ENCODE measurements at regions of chr7 and their contacts with region 1.

Region 1: DNA sequence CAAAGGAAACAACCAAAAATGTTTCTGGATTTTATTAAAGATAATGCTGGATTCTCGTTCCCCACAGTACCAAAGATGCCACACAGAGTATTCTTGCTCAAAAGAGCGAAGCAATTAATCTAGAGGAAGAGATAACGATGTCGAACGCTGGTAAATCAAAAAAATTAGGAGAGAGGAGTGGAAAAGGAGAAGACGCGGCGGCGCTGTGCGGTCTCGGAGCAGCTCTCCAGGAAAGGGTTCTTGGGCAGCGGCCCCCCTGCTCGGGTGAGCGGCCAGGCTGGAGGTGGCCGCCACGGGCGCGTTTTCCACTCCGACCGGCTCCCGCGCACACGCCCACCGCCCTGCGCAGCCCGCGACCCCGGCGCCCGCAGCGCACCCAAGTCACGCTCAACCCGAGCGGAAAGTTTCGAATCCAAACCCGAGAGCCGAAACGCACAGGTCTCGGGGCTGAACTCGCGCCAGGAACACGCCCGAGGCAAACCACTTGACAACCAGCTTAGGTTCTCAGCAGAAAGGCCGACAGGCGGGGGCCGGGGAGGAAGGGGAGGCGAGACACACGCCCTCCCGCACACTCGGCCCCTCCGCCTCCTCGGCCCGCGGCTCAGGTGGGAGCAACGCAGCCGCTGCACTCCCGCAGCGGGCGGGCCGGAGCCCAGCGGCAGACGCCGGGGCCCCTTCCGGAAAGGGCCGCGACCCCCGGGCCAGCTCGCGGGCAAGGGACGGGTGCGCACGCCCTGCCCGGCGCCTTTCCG is 924 bp downstream of the SRPK2 start:
- H3K4me3 Mint-ChIP-seq: peak overlapping the region; percentile 87
- H3K27ac Mint-ChIP-seq: peak overlapping the region; percentile 52
- H3K4me1 Mint-ChIP-seq: peaks cover 35% of the 10 kb centered on the region
- H3K27me3 Mint-ChIP-seq: peaks cover 4% of the 10 kb centered on the region

Region 2: GRCh38 chr7:105336009-105336408 is 51.8 kb before region 1 on chr7:
- intact Hi-C with region 1: loop called (anchors 10 kb)
- H3K4me3 Mint-ChIP-seq: no peak overlapping the region
- H3K27ac Mint-ChIP-seq: no peak overlapping the region
- H3K4me1 Mint-ChIP-seq: peaks cover 10% of the 10 kb centered on the region
- H3K27me3 Mint-ChIP-seq: no peaks in the 10 kb centered on the region

Region 3: GRCh38 chr7:105352018-105352612 is 35.7 kb before region 1 on chr7:
- intact Hi-C with region 1: loop called (anchors 2 kb)
- H3K4me3 Mint-ChIP-seq: peak overlapping the region; percentile 61
- H3K27ac Mint-ChIP-seq: peak overlapping the region; percentile 90
- H3K4me1 Mint-ChIP-seq: peaks cover 67% of the 10 kb centered on the region
- H3K27me3 Mint-ChIP-seq: no peaks in the 10 kb centered on the region

Region 4: GRCh38 chr7:105399043-105399725 is 11.4 kb after region 1 on chr7:
- intact Hi-C with region 1: no loop called
- H3K4me3 Mint-ChIP-seq: no peak overlapping the region
- H3K27ac Mint-ChIP-seq: no peak overlapping the region
- H3K4me1 Mint-ChIP-seq: peaks cover 18% of the 10 kb centered on the region
- H3K27me3 Mint-ChIP-seq: peaks cover 4% of the 10 kb centered on the region